ENCODE measurements at regions of chr4 and their contacts with region 1.

Region 1: GRCh38 chr4:73711989-73712388 is 28.4 kb upstream of the CXCL8 start:
- DNase-seq: no peak
- CTCF ChIP-seq: no peak

Region 2: GRCh38 chr4:73698217-73698616 is 13.8 kb before region 1 on chr4:
- CTCF ChIA-PET with region 1: interaction called, 15 read pairs
- POLR2A ChIA-PET with region 1: no interaction called
- DNase-seq: no peak
- CTCF ChIP-seq: no peak

Measured in GM10248 (cell line).